A549 (cell line): ENCODE measurements at regions of chr1 and their contacts with region 1.

Region 1: GRCh38 chr1:241847796-241848685 is at the start of gene EXO1:
- DNase-seq: peak; percentile 93 to 98
- ATAC-seq: peak; percentile 96 to 97
- H3K4me3 ChIP-seq: peak within 1 kb of the TSS; percentile 81
- H3K27ac ChIP-seq: peak within 1 kb of the TSS; percentile 94 to 99
- H3K4me1 ChIP-seq: peaks cover 16% of the 10 kb centered on the region
- CTCF ChIP-seq: peak; percentile 64
- EP300 ChIP-seq: no peak
- POLR2A ChIP-seq: peak; percentile 54
- RAD21 ChIP-seq: peak; percentile 59 to 61
- polyA plus RNA-seq, gene EXO1: 22.1 and 33.1 TPM in 2 replicates

Region 2: GRCh38 chr1:241744591-241744990 is 103.5 kb before region 1 on chr1:
- CTCF ChIA-PET with region 1: no interaction called
- POLR2A ChIA-PET with region 1: no interaction called
- DNase-seq: no peak
- ATAC-seq: no peak
- H3K4me3 ChIP-seq: no peak overlapping the region
- H3K27ac ChIP-seq: no peak overlapping the region
- H3K4me1 ChIP-seq: no peaks in the 10 kb centered on the region
- CTCF ChIP-seq: no peak
- EP300 ChIP-seq: no peak
- POLR2A ChIP-seq: no peak
- RAD21 ChIP-seq: no peak

Region 3: DNA sequence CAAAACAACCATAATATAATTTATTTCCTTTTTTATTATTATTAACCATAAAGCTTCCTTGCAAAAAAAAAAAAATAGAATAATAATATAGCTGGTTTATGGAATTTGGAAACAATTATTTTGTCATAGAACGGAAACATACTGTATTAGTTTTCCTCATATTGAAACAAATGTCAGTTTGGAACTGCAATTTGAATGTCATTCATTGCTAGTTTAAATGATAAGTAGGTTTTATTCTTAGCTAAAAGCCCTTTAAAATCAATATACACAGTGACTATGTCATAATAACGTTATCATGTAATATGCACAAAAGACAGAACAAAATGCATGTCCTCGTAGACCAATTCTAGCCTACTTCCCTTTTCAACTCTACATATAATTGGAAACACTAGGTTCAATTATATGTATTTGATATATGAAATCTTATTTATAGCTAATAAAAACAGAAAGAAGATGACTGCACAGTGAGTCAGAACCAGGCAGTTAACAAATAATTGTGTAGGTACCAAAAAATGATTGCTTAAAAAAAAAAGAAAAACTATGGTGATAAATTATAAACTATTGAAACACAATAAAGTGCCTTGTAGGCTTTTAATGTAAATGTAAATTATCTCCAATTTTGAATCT is 85.2 kb before region 1 on chr1:
- CTCF ChIA-PET with region 1: no interaction called
- POLR2A ChIA-PET with region 1: no interaction called
- DNase-seq: no peak
- ATAC-seq: no peak
- H3K4me3 ChIP-seq: no peak overlapping the region
- H3K27ac ChIP-seq: no peak overlapping the region
- H3K4me1 ChIP-seq: no peaks in the 10 kb centered on the region
- CTCF ChIP-seq: no peak
- EP300 ChIP-seq: no peak
- POLR2A ChIP-seq: no peak
- RAD21 ChIP-seq: no peak

Region 4: GRCh38 chr1:241834733-241835377 is 13.2 kb before region 1 on chr1:
- CTCF ChIA-PET with region 1: interaction called, 12 read pairs
- POLR2A ChIA-PET with region 1: no interaction called
- DNase-seq: peak; percentile 27 to 68
- ATAC-seq: peak; percentile 64 to 73; a peak in 5 of 6 replicates
- H3K4me3 ChIP-seq: no peak overlapping the region
- H3K27ac ChIP-seq: no peak overlapping the region; a peak in 1 of 6 replicates
- H3K4me1 ChIP-seq: peaks cover 29% of the 10 kb centered on the region
- CTCF ChIP-seq: peak; percentile 87
- EP300 ChIP-seq: no peak
- POLR2A ChIP-seq: no peak
- RAD21 ChIP-seq: peak; percentile 90

Region 5: DNA sequence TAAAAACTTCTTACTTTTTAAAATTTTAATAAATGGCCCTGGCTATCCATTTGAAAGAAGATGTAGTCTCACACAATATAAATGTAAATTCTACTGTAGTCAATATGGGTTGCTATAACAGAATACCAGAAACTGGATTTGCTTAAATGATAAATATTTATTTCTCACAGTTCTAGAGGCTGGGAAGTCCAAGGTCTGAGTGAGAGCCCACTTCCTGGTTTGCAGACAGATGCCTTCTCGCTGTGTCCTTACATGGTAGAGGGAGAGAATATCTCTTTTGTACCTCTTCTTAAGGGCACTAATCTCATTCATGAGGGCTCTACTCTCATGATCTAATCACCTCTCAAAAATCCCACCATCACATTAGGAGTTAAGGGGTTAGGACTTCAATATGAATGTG is 35.1 kb after region 1 on chr1:
- CTCF ChIA-PET with region 1: no interaction called
- POLR2A ChIA-PET with region 1: no interaction called
- DNase-seq: no peak
- ATAC-seq: no peak
- H3K4me3 ChIP-seq: no peak overlapping the region
- H3K27ac ChIP-seq: no peak overlapping the region
- H3K4me1 ChIP-seq: no peaks in the 10 kb centered on the region
- CTCF ChIP-seq: no peak
- EP300 ChIP-seq: no peak
- POLR2A ChIP-seq: no peak
- RAD21 ChIP-seq: no peak